ENCODE measurements at regions of chr1 and their contacts with region 1.

Region 1: GRCh38 chr1:179910934-179911333 is 28.8 kb downstream of the TOR1AIP1 start:
- DNase-seq: no peak
- ATAC-seq: no peak
- H3K4me3 ChIP-seq: no peak overlapping the region
- H3K27ac ChIP-seq: no peak overlapping the region
- H3K4me1 ChIP-seq: no peaks in the 10 kb centered on the region
- H3K27me3 ChIP-seq: no peaks in the 10 kb centered on the region
- CTCF ChIP-seq: no peak
- EP300 ChIP-seq: no peak
- POLR2A ChIP-seq: no peak
- RAD21 ChIP-seq: no peak

Region 2: DNA sequence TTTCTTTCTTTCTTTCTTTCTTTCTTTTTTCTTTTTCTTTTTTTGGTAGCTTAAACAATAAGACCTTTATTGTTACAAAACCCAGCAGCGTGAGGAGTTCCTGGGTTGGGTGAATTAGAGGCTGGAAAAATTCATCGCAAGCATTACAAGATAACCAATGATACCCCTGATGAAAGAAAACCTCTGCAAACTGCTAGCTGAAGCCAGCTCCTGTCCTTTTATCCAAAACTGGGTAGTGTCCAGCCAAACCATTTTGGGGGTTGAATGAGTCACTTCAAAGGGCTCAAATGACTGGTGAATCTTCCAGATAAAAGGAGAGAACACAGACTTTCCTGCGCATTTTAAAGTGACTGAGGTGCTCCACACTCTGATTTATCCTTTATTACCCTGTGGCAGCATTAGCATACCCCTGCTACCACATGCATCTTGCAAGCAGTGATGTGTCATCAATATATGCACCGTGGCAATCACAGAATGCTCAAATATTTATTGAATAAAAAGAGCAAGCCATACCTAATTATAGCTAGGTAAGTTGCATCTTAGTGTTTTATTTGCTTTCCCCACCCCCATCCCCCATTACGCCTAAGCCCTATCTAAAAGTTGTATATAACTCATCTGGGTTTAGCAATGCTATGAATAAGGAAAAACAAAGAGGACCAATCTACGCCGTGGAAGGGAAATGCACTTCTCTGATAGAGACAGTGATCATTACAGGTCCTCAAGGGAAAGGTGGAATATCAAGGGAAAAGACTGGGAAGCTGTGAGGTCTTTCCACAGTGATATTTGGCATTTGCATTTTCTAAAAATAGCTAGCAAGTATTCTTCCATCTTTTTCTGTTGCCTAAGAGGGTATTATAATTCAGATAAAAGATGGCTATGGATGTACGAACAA is 11.3 kb after region 1 on chr1:
- CTCF ChIA-PET with region 1: interaction called, 3 read pairs
- POLR2A ChIA-PET with region 1: interaction called, 5 read pairs
- RAD21 ChIA-PET with region 1: interaction called, 4 read pairs
- SMC1A ChIA-PET with region 1: interaction called, 15 read pairs
- in situ Hi-C with region 1: no loop called
- intact Hi-C with region 1: no loop called
- DNase-seq: no peak
- ATAC-seq: no peak
- H3K4me3 ChIP-seq: no peak overlapping the region
- H3K27ac ChIP-seq: no peak overlapping the region
- H3K4me1 ChIP-seq: no peaks in the 10 kb centered on the region
- H3K27me3 ChIP-seq: no peaks in the 10 kb centered on the region
- CTCF ChIP-seq: no peak
- EP300 ChIP-seq: no peak
- POLR2A ChIP-seq: no peak
- RAD21 ChIP-seq: no peak

Measured in GM12878 (cell line).